ENCODE measurements at regions of chr18 and their contacts with region 1.

Region 1: DNA sequence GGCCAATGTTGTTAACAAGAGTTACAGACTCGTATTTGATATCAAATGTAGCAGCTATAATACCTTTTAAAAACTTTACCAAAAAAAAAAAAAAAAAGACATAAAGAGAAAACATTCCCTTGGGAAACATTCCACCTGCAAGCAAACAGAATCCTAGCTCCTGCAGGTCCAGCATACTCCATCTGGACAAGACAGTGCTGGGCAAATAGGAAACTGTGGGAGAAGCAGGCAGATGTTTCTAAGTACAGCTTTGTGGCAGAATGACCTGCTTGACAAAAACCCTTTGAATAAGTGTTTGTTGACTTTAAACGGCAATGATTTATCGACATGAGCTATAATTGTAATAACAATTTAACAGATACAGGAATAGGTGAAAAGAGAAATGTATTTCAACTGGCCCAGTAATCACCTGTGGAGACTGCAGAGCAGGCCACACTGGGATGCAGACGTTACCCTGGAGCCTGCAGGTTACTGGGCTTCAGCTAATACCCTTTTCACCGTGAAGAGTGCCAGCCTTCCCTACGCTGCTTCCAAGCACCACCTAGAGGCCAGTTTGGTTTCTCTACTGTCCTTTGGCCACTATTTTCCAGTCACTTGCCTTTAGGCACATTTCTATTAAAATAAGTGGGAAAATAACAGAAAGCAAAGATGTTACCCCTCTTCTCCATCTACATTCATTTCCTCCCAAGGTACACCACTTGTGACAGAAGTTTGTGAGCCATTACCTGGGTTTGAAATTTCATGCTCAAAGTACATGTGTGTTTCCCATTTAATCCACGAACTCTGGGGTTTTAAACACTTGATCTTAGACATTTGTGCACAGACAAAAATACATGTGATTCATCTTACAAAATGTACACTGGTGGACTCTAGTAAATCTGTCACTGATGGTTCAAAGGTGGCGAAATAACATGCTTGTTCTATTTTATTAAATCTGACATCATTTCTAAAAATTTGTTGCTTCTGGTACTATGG is 96.9 kb upstream of the ZNF397 start:
- DNase-seq: peak; percentile 21
- H3K4me3 ChIP-seq: no peak overlapping the region
- H3K27ac ChIP-seq: no peak overlapping the region
- H3K27me3 ChIP-seq: no peaks in the 10 kb centered on the region
- CTCF ChIP-seq: peak; percentile 90

Region 2: GRCh38 chr18:34880882-34881834 is 262.8 kb before region 1 on chr18:
- CTCF ChIA-PET with region 1: interaction called, 36 read pairs
- POLR2A ChIA-PET with region 1: no interaction called
- DNase-seq: no peak
- H3K4me3 ChIP-seq: no peak overlapping the region
- H3K27ac ChIP-seq: no peak overlapping the region
- H3K27me3 ChIP-seq: no peaks in the 10 kb centered on the region
- CTCF ChIP-seq: peak; percentile 50

Region 3: DNA sequence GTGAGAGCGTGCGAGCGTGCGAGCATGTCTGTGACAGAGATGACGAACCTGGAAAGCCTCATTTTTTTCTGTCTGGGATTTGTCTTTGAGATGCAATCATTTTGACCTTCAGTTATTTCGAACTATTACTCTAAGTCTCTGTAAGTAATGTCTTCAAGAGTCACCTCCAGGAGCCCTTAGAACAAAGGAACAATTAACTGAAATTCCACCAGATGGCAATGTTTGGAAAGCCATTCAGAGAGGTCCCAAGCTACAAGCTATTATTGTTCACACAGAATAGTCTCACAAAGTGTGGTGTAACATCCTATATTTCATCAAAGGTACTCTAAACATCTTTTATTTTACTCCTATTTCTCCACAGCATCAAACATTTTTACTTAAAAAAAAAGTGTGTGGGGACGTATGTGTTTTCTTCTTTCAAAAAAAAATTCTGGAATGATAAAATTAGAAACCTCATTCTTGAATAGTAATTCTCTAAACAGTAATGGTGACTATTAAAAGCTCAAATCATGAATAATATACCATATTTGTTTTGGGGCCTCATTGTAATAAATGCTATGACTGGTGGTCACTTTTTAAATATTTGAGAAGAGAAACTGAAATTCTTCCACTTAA is 137.8 kb before region 1 on chr18:
- CTCF ChIA-PET with region 1: interaction called, 164 read pairs
- POLR2A ChIA-PET with region 1: interaction called, 3 read pairs
- DNase-seq: peak; percentile 27
- H3K4me3 ChIP-seq: no peak overlapping the region
- H3K27ac ChIP-seq: no peak overlapping the region
- H3K27me3 ChIP-seq: peaks cover 3% of the 10 kb centered on the region
- CTCF ChIP-seq: peak; percentile 71

Region 4: GRCh38 chr18:35029770-35030169 is 114.1 kb before region 1 on chr18:
- CTCF ChIA-PET with region 1: interaction called, 21 read pairs
- POLR2A ChIA-PET with region 1: no interaction called
- DNase-seq: no peak
- H3K4me3 ChIP-seq: no peak overlapping the region
- H3K27ac ChIP-seq: no peak overlapping the region
- H3K27me3 ChIP-seq: no peaks in the 10 kb centered on the region
- CTCF ChIP-seq: peak; percentile 18; the same call in 1 of the 2 replicates

Region 5: DNA sequence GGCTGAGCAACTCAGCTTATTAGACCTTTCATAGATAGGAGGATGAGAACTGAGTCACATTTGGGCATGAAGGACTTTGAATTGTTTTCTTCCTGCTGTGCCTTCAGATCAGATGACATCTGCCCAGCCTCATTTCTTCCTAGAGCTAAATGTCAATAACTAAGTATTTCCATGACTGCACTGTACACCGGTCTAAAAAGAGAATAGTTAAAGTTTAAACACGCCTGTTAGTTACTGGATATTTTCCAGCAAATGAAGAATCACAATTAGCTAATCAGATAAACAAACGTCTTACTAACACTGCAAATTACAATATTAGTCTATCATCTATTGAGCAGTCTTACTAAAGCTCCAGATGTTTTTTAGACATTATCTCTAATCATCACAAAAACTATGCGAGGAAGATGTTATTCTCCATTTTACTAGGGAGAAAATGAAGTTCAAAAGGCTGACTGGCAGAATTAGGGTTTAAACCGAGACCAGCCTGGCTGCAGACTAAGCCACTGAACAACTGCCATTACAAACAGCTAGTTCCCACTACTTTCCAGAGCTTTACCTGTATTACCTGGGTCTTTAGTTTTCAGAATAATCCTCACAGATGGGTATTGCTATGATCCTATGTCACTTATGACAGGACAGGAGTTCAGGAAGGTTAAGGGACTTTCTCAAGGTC is 27.5 kb after region 1 on chr18:
- CTCF ChIA-PET with region 1: interaction called, 14 read pairs
- POLR2A ChIA-PET with region 1: no interaction called
- DNase-seq: no peak
- H3K4me3 ChIP-seq: no peak overlapping the region
- H3K27ac ChIP-seq: no peak overlapping the region
- H3K27me3 ChIP-seq: peaks cover 3% of the 10 kb centered on the region
- CTCF ChIP-seq: no peak

Measured in AG04450 (cell line).